Activated B cell treated with CpG ODN at 0.5 μM for 24 hours (primary cell): ENCODE measurements at regions of chr2 and their contacts with region 1.

Region 1: GRCh38 chr2:73212448-73213176 is 1.4 kb upstream of the SMYD5 start:
- DNase-seq: peak; percentile 64
- ATAC-seq: peak; percentile 60
- H3K4me3 Mint-ChIP-seq: peak overlapping the region; percentile 49
- H3K27ac Mint-ChIP-seq: no peak overlapping the region
- H3K4me1 Mint-ChIP-seq: peaks cover 32% of the 10 kb centered on the region
- H3K27me3 Mint-ChIP-seq: peaks cover 14% of the 10 kb centered on the region
- CTCF ChIP-seq: no peak

Region 2: GRCh38 chr2:72887754-72888437 is 324.7 kb before region 1 on chr2:
- CTCF ChIA-PET with region 1: interaction called, 8 read pairs
- POLR2A ChIA-PET with region 1: no interaction called
- intact Hi-C with region 1: loop called (anchors 1 kb)
- DNase-seq: peak; percentile 46
- ATAC-seq: peak; percentile 32
- H3K4me3 Mint-ChIP-seq: peak overlapping the region; percentile 79
- H3K27ac Mint-ChIP-seq: no peak overlapping the region
- H3K4me1 Mint-ChIP-seq: peaks cover 13% of the 10 kb centered on the region
- H3K27me3 Mint-ChIP-seq: peaks cover 61% of the 10 kb centered on the region
- CTCF ChIP-seq: peak; percentile 46

Region 3: DNA sequence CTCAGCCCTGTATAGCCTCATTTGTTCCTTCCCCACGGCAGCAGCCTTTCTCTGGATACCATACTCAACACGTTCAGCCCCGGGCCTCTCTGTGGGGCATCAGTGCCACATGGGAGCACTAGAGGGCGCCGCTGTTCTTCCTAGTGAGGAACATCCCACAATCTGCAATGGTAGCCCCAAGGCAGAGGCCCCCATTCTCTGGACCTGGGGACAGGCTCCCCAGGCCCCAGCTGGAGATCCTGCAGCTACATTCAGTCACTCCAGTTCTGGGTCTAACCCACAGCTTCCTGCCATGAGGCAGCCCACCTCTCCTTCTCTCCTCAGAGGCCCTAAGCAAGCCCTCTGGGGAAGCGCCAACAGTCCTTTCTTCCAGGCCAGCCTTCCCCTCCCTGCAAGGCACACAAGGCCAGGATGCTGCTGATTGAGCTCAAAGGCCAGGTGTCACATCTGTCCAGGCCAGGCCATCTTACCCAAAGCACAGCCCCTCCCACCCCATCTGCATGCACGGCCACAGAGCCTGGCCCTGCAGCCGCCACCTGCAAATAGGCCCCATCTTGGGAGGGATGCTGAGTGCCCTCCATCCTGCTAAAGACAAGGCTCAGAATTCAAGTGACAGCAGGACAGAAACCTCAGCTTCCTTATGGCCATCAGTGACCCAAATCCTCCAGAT is 126.8 kb before region 1 on chr2:
- CTCF ChIA-PET with region 1: interaction called, 22 read pairs
- POLR2A ChIA-PET with region 1: no interaction called
- intact Hi-C with region 1: loop called (anchors 1 kb)
- DNase-seq: peak; percentile 62
- ATAC-seq: peak; percentile 96
- H3K4me3 Mint-ChIP-seq: no peak overlapping the region
- H3K27ac Mint-ChIP-seq: no peak overlapping the region
- H3K4me1 Mint-ChIP-seq: no peaks in the 10 kb centered on the region
- H3K27me3 Mint-ChIP-seq: peaks cover 3% of the 10 kb centered on the region
- CTCF ChIP-seq: no peak

Region 4: GRCh38 chr2:73197579-73197978 is 15.0 kb before region 1 on chr2:
- CTCF ChIA-PET with region 1: no interaction called
- POLR2A ChIA-PET with region 1: no interaction called
- intact Hi-C with region 1: no loop called
- DNase-seq: no peak
- ATAC-seq: no peak
- H3K4me3 Mint-ChIP-seq: no peak overlapping the region
- H3K27ac Mint-ChIP-seq: no peak overlapping the region
- H3K4me1 Mint-ChIP-seq: peaks cover 6% of the 10 kb centered on the region
- H3K27me3 Mint-ChIP-seq: peaks cover 44% of the 10 kb centered on the region
- CTCF ChIP-seq: no peak

Region 5: DNA sequence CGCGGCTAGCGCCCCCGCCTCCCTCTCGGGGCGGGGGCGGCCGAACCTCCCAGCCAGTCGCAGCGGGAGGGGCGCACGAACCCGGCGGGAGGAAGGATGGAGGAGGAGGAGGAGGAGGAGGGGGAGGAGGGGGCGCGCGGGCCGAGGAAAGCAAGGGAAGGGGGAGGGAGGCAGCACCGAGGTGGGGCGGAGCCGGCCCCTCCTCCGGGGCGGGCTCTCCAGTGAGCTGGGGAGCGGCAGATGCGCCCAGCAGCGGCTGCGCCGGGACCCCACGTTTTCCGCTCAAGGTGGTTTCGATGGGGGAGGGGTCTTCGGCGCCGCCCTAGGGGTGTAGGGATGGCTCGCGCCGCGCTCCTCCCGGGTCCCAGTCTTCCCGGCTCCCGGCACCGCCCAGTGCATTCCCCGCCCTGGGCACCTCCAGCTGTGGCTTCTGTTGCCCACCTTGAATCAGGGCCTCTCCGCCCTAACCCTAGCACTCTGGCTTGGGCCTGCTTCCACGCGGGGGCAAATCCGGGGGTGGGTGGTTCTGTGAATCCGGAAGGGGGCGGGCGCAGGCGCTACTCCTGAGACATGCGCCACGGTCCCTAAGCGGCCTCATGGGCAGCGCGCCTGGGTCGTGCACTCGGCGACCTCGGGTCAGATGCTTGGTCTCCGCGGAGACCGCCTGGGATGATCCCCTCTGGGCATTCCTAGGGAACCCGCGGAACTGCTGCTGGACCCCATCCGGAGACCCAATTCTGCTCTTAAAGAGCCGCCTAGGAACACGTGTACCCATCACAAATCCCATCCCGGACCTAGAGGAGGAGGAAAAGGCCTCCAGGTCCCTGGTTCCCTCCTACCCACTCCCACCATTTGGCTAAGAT is 71.9 kb after region 1 on chr2 and contains the start of gene FBXO41:
- CTCF ChIA-PET with region 1: interaction called, 12 read pairs
- POLR2A ChIA-PET with region 1: interaction called, 9 read pairs
- intact Hi-C with region 1: loop called (anchors 1 kb)
- DNase-seq: peak; percentile 67
- ATAC-seq: peak; percentile 73
- H3K4me3 Mint-ChIP-seq: peak within 1 kb of the TSS; percentile 82
- H3K27ac Mint-ChIP-seq: peak within 1 kb of the TSS; percentile 89
- H3K4me1 Mint-ChIP-seq: peaks cover 36% of the 10 kb centered on the region
- H3K27me3 Mint-ChIP-seq: no peaks in the 10 kb centered on the region
- CTCF ChIP-seq: no peak
- total RNA-seq, gene FBXO41: 21.4 and 25.7 TPM in 2 replicates

Region 6: GRCh38 chr2:73385595-73386341 is 173.2 kb after region 1 on chr2 and contains the start of gene ALMS1:
- CTCF ChIA-PET with region 1: no interaction called
- POLR2A ChIA-PET with region 1: no interaction called
- intact Hi-C with region 1: loop called (anchors 1 kb)
- DNase-seq: peak; percentile 85
- ATAC-seq: peak; percentile 85
- H3K4me3 Mint-ChIP-seq: peak within 1 kb of the TSS; percentile 90
- H3K27ac Mint-ChIP-seq: peak within 1 kb of the TSS; percentile 89
- H3K4me1 Mint-ChIP-seq: peaks cover 19% of the 10 kb centered on the region
- H3K27me3 Mint-ChIP-seq: peaks cover 3% of the 10 kb centered on the region
- CTCF ChIP-seq: no peak
- total RNA-seq, gene ALMS1: 17.8 and 20.1 TPM in 2 replicates

Region 7: DNA sequence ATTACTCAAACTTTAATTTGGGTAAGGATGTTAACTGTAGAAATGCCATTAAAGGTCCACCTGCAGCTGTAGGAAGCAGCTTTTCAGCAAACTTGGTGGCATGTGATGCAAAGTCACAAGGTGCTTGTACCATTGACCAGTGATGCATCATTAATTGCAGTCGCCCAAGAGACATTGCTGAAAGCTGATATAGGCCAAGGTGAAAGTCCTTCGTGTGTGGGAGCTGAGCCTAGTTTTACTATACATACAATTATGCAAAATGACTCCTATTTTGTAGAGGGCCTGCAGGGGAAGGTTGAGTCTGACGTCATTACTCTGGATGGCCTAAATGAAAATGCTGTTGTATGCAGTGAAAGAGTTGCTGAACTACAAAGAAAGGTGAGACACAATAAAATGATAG is 213.6 kb after region 1 on chr2:
- CTCF ChIA-PET with region 1: no interaction called
- POLR2A ChIA-PET with region 1: no interaction called
- intact Hi-C with region 1: no loop called
- DNase-seq: no peak
- ATAC-seq: no peak
- H3K4me3 Mint-ChIP-seq: no peak overlapping the region
- H3K27ac Mint-ChIP-seq: no peak overlapping the region
- H3K4me1 Mint-ChIP-seq: no peaks in the 10 kb centered on the region
- H3K27me3 Mint-ChIP-seq: no peaks in the 10 kb centered on the region
- CTCF ChIP-seq: no peak

Region 8: DNA sequence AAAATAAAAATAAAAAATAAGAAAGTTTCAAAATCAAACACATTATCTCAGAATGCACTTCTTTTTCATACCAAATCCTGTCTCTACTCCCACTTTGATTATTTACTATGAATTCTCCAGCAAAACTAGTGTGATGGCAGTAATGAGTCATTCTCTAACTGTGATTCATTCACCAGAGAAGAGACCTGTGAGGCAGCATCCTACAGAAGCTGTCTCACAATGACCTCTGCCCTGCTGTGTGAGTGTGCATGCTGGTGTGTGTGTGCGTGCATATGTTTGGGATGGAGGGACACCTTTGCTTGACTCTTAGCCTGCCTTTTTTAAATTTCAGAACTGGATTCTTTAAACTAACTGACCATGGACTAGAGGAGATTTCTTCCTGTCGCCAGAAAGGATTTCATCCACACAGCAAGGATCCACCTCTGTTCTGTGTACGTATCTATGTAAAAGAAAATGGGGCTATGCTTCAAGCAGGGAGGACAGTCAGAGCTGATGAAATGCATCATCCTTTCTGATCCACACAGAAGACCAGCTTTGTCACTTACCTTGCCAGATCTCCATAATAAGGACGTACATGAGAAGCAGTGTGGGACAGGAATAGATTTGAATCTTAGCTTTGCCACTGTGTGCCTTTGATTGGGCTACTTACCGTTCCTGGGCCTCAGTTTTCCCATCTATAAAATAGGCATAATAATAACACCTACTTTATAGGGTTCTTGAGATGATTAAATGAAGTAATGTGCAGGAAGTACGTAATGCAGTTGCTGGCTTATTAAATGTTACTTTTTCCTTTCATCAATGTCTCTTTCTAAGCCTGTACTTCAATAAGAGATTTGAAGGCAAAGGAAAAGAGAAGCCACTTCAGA is 647.3 kb after region 1 on chr2:
- CTCF ChIA-PET with region 1: no interaction called
- POLR2A ChIA-PET with region 1: no interaction called
- intact Hi-C with region 1: no loop called
- DNase-seq: no peak
- ATAC-seq: no peak
- H3K4me3 Mint-ChIP-seq: no peak overlapping the region
- H3K27ac Mint-ChIP-seq: no peak overlapping the region
- H3K4me1 Mint-ChIP-seq: peaks cover 13% of the 10 kb centered on the region
- H3K27me3 Mint-ChIP-seq: no peaks in the 10 kb centered on the region
- CTCF ChIP-seq: no peak

Region 9: DNA sequence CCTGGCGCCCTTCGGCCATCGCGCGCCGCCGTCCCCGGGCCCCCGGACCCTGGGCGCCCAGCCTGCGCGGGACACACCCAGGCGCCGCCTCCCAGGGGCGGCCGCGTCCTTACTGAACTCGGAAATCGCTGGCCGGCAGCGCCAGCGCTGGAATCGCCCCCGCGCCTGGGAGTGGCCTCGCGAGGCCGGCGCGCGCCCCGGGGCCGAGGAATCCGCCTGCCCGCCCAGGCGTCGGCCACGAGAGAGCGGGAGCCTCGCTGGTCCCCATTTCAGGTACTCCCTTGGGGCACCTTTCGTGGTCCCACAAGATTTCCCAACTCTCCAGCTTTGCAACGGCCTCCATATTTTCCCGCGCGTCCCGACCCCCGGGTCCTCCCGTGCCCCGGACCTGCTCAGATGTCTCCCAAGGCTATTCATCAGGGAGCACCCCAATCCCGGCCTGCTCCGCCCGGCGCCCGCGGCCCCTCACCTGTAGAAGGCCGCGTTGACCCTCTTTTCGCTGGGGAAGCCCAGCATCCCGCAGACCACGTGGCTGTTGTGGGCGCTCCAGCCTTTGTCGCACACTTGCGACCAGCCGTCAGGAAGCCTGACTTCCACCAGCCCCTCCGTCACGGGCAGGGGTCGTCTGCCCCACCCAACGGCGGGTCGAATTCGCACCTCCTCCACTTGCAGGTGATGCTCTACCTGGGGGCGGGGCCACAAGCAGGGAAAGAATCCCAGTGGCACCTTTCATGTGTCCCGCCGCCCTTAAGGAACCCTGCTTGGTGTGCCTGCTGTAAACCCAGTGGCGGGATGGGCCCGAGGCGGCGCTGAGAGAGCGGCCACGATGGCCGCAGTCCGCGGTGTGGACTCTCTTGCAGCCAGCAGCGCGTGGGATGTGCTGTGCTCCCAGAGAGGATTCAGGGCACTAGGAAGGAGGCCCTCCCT is 1336.6 kb after region 1 on chr2:
- CTCF ChIA-PET with region 1: no interaction called
- POLR2A ChIA-PET with region 1: no interaction called
- intact Hi-C with region 1: no loop called
- DNase-seq: no peak
- ATAC-seq: peak; percentile 50
- H3K4me3 Mint-ChIP-seq: peak overlapping the region; percentile 80
- H3K27ac Mint-ChIP-seq: no peak overlapping the region
- H3K4me1 Mint-ChIP-seq: peaks cover 27% of the 10 kb centered on the region
- H3K27me3 Mint-ChIP-seq: peaks cover 19% of the 10 kb centered on the region
- CTCF ChIP-seq: no peak